CD8-positive, alpha-beta memory T cell (primary cell): ENCODE measurements at regions of chr10 and their contacts with region 1.

Region 1: DNA sequence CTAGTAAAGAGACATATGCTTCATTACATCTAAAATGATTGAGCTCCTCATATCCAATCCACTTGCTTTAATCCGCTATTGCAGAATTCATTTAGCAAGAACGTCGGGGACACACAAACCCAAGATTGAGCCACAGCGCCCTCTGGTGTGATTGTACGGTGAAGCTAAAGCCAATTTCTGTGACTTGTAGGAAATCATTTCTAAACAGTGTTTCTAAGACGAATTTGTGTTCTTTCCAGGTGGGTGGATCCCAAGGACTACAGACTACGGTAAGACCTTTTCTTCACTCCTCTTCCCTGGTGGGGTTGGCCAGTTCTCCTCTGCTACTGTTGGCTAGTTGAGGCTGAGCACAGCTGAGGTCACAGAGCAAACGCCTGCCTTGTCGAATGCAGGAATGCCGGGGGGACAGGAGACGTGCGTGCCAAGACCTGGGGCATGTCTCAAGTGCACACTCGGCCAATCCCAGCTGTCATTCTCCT is 5.2 kb downstream of the DMBT1 start:
- DNase-seq: peak; percentile 47 to 81 (median 60)
- H3K4me3 ChIP-seq: no peak overlapping the region
- H3K4me3 Mint-ChIP-seq: peak overlapping the region in 1 of 7 donors; percentile 50
- H3K27ac ChIP-seq: no peak overlapping the region
- H3K27ac Mint-ChIP-seq: peak overlapping the region in 1 of 8 donors; percentile 24
- H3K4me1 ChIP-seq: no peaks in the 10 kb centered on the region
- H3K4me1 Mint-ChIP-seq: peaks cover 8 to 19% (median 15%) of the 10 kb centered on the region in 3 donors
- H3K27me3 ChIP-seq: no peaks in the 10 kb centered on the region
- H3K27me3 Mint-ChIP-seq: peaks cover 21 to 44% of the 10 kb centered on the region in 2 donors

Region 2: GRCh38 chr10:122342293-122343134 is 223.3 kb before region 1 on chr10:
- CTCF ChIA-PET with region 1: interaction called, 10 read pairs
- POLR2A ChIA-PET with region 1: no interaction called
- DNase-seq: peak; percentile 38 to 74 (median 55)
- H3K4me3 ChIP-seq: no peak overlapping the region
- H3K4me3 Mint-ChIP-seq: no peak overlapping the region
- H3K27ac ChIP-seq: no peak overlapping the region
- H3K27ac Mint-ChIP-seq: peak overlapping the region in 2 of 8 donors; percentile 8 to 77
- H3K4me1 ChIP-seq: no peaks in the 10 kb centered on the region
- H3K4me1 Mint-ChIP-seq: peaks cover 0 to 9% (median 2%) of the 10 kb centered on the region in 3 donors
- H3K27me3 ChIP-seq: no peaks in the 10 kb centered on the region
- H3K27me3 Mint-ChIP-seq: peaks cover 3 to 11% of the 10 kb centered on the region in 2 donors

Region 3: GRCh38 chr10:122515588-122516231 is 50.1 kb before region 1 on chr10:
- CTCF ChIA-PET with region 1: interaction called, 28 read pairs
- POLR2A ChIA-PET with region 1: interaction called, 3 read pairs
- DNase-seq: peak; percentile 44 to 81 (median 60)
- H3K4me3 ChIP-seq: no peak overlapping the region
- H3K4me3 Mint-ChIP-seq: peak overlapping the region in 6 of 7 donors; percentile 52 to 87 (median 54)
- H3K27ac ChIP-seq: no peak overlapping the region
- H3K27ac Mint-ChIP-seq: peak overlapping the region; percentile 44 to 90 (median 76)
- H3K4me1 ChIP-seq: peaks cover 26% of the 10 kb centered on the region
- H3K4me1 Mint-ChIP-seq: peaks cover 45 to 54% (median 45%) of the 10 kb centered on the region in 3 donors
- H3K27me3 ChIP-seq: no peaks in the 10 kb centered on the region
- H3K27me3 Mint-ChIP-seq: peaks cover 0 to 3% of the 10 kb centered on the region in 2 donors

Region 4: GRCh38 chr10:122541541-122542002 is 24.2 kb before region 1 on chr10:
- CTCF ChIA-PET with region 1: interaction called, 17 read pairs
- POLR2A ChIA-PET with region 1: no interaction called
- DNase-seq: peak in 1 of 5 donors; percentile 29
- H3K4me3 ChIP-seq: peak overlapping the region; percentile 2
- H3K4me3 Mint-ChIP-seq: peak overlapping the region in 6 of 7 donors; percentile 37 to 63 (median 47)
- H3K27ac ChIP-seq: no peak overlapping the region
- H3K27ac Mint-ChIP-seq: peak overlapping the region in 7 of 8 donors; percentile 37 to 89 (median 72)
- H3K4me1 ChIP-seq: peaks cover 45% of the 10 kb centered on the region
- H3K4me1 Mint-ChIP-seq: peaks cover 59 to 64% (median 64%) of the 10 kb centered on the region in 3 donors
- H3K27me3 ChIP-seq: no peaks in the 10 kb centered on the region
- H3K27me3 Mint-ChIP-seq: peaks cover 0 to 3% of the 10 kb centered on the region in 2 donors